CD8-positive, alpha-beta T cell (primary cell): ENCODE measurements at regions of chr3 and their contacts with region 1.

Region 1: DNA sequence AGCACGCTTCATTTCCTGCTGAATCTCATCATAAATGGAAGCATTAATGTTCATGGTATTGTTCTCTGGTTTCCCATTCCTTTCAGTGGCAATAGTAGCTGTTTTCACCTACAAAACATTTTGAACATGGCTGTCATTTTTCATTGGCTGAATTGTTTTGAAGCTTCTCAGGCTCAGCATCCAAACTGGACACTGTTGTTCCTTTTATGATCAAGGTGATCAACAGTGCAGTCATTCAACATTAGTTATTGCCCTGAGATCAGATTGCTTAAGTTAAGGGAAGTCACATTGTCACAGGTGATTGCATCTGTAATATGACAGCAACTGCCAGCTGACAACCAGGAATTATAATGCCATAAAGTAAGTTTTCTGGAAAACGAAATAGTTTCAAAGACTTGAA is 46.9 kb downstream of the SATB1 start:
- DNase-seq: no peak
- ATAC-seq: no peak
- H3K4me3 ChIP-seq: no peak overlapping the region
- H3K4me3 Mint-ChIP-seq: no peak overlapping the region
- H3K27ac ChIP-seq: no peak overlapping the region
- H3K27ac Mint-ChIP-seq: no peak overlapping the region
- H3K4me1 ChIP-seq: peaks cover 73% of the 10 kb centered on the region
- H3K4me1 Mint-ChIP-seq: peaks cover 83% of the 10 kb centered on the region
- H3K27me3 ChIP-seq: no peaks in the 10 kb centered on the region
- H3K27me3 Mint-ChIP-seq: no peaks in the 10 kb centered on the region
- CTCF ChIP-seq: no peak

Region 2: GRCh38 chr3:17243621-17244020 is 1134.6 kb before region 1 on chr3:
- CTCF ChIA-PET with region 1: no interaction called
- POLR2A ChIA-PET with region 1: no interaction called
- intact Hi-C with region 1: no loop called
- DNase-seq: no peak
- ATAC-seq: no peak
- H3K4me3 ChIP-seq: no peak overlapping the region
- H3K4me3 Mint-ChIP-seq: no peak overlapping the region
- H3K27ac ChIP-seq: no peak overlapping the region
- H3K27ac Mint-ChIP-seq: no peak overlapping the region
- H3K4me1 ChIP-seq: no peaks in the 10 kb centered on the region
- H3K4me1 Mint-ChIP-seq: no peaks in the 10 kb centered on the region
- H3K27me3 ChIP-seq: no peaks in the 10 kb centered on the region
- H3K27me3 Mint-ChIP-seq: no peaks in the 10 kb centered on the region
- CTCF ChIP-seq: no peak

Region 3: GRCh38 chr3:18363338-18363737 is 14.9 kb before region 1 on chr3:
- CTCF ChIA-PET with region 1: no interaction called
- POLR2A ChIA-PET with region 1: interaction called, 3 read pairs
- intact Hi-C with region 1: loop called in 1 of 2 experiments (anchors 1 kb)
- DNase-seq: no peak
- ATAC-seq: no peak
- H3K4me3 ChIP-seq: no peak overlapping the region
- H3K4me3 Mint-ChIP-seq: no peak overlapping the region
- H3K27ac ChIP-seq: no peak overlapping the region
- H3K27ac Mint-ChIP-seq: peak overlapping the region; percentile 70
- H3K4me1 ChIP-seq: peaks cover 18% of the 10 kb centered on the region
- H3K4me1 Mint-ChIP-seq: peaks cover 74% of the 10 kb centered on the region
- H3K27me3 ChIP-seq: no peaks in the 10 kb centered on the region
- H3K27me3 Mint-ChIP-seq: no peaks in the 10 kb centered on the region
- CTCF ChIP-seq: no peak